Ascending aorta (tissue), 2 donors: ENCODE measurements at regions of chr19 and their contacts with region 1.

Region 1: GRCh38 chr19:54029930-54030490 is 33.7 kb downstream of the VSTM1 start:
- DNase-seq: peak in 1 of 2 donors; percentile 70
- H3K4me3 ChIP-seq: no peak overlapping the region
- H3K27ac ChIP-seq: no peak overlapping the region
- H3K4me1 ChIP-seq: no peaks in the 10 kb centered on the region
- H3K27me3 ChIP-seq: no peaks in the 10 kb centered on the region
- CTCF ChIP-seq: peak in 2 of 3 experiments; percentile 19 to 44

Region 2: GRCh38 chr19:53792721-53793433 is 237.1 kb before region 1 on chr19:
- intact Hi-C with region 1: loop called (anchors 5 kb)
- DNase-seq: peak; percentile 43 to 90
- H3K4me3 ChIP-seq: no peak overlapping the region
- H3K27ac ChIP-seq: no peak overlapping the region
- H3K4me1 ChIP-seq: no peaks in the 10 kb centered on the region
- H3K27me3 ChIP-seq: no peaks in the 10 kb centered on the region
- CTCF ChIP-seq: peak; percentile 84 to 97 (median 90)

Region 3: DNA sequence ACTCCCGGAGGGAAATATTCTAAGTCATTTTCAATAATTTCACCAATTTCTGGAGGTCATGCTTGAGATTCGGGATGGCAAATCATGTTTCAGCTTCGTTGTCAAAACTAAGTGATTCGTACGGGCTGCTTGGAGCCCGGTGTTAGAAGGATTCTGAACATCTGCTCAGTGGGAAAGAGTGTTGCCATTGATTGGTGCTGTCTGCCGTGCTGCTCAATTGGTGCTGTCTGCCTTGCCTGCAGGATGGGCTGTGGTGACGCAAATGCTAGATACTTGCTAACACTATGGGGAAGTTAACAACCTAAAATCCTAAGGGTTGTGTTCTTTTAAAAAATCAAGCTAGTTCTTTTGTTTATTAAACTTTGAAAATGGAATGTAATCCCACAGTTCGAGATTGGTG is 84.6 kb before region 1 on chr19:
- intact Hi-C with region 1: no loop called
- DNase-seq: no peak
- H3K4me3 ChIP-seq: no peak overlapping the region
- H3K27ac ChIP-seq: no peak overlapping the region
- H3K4me1 ChIP-seq: no peaks in the 10 kb centered on the region
- H3K27me3 ChIP-seq: peaks cover 6% of the 10 kb centered on the region
- CTCF ChIP-seq: no peak

Region 4: GRCh38 chr19:54281007-54281728 is 251.2 kb after region 1 on chr19 and contains the start of gene LILRB2:
- intact Hi-C with region 1: no loop called
- DNase-seq: no peak
- H3K4me3 ChIP-seq: no peak within 1 kb of the TSS
- H3K27ac ChIP-seq: no peak within 1 kb of the TSS
- H3K4me1 ChIP-seq: no peaks in the 10 kb centered on the region
- H3K27me3 ChIP-seq: no peaks in the 10 kb centered on the region
- CTCF ChIP-seq: no peak
- total RNA-seq, gene LILRB2: 0.11 TPM